ENCODE measurements at regions of chr15 and their contacts with region 1.

Region 1: GRCh38 chr15:27527490-27528067 is 556.6 kb downstream of the GABRG3 start:
- DNase-seq: no peak
- H3K4me3 ChIP-seq: no peak overlapping the region
- H3K27ac ChIP-seq: no peak overlapping the region
- H3K4me1 ChIP-seq: no peaks in the 10 kb centered on the region
- H3K27me3 ChIP-seq: no peaks in the 10 kb centered on the region
- CTCF ChIP-seq: no peak
- EP300 ChIP-seq: no peak
- POLR2A ChIP-seq: no peak

Region 2: DNA sequence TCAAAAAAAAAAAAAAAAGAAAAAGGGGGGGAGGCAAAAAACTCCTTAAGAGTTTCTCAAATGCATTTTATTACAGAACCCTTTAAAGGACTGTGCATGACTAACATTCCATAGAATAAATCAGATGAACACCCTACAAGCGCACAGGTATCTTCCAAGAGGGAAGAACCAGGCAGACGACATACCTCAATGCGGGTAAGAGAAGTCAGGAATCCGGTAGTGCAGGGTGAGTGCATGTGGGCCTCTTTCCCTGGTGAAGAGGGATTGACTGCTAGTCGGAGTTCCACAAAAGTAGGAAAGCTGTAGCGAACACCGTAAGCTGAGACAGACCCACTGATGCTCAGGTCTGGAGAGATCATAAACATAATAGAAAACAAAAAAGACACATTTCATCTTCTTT is 1187.2 kb before region 1 on chr15:
- intact Hi-C with region 1: loop called in 1 of 4 experiments (anchors 5 kb)
- DNase-seq: no peak
- H3K4me3 ChIP-seq: no peak overlapping the region
- H3K27ac ChIP-seq: no peak overlapping the region
- H3K4me1 ChIP-seq: no peaks in the 10 kb centered on the region
- H3K27me3 ChIP-seq: no peaks in the 10 kb centered on the region
- CTCF ChIP-seq: no peak
- EP300 ChIP-seq: no peak
- POLR2A ChIP-seq: no peak

Region 3: DNA sequence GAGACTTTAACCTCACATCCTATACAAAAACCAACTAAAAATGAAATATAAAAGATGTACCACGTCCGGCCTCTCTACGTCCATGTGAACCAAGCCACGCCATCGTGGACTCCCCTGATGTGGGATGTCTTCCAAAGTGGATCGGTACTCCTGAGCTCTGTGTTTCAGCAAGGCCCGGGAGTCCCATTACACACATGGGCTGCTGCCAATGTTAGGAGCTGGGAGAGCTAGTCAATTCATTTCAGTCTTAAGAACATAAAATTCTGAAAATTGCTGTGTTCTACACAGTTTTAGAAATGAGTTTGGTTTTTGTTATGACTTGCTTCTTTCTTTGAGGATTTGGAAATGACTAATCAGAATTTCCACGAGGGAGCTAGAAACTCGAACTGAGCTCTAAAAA is 425.6 kb before region 1 on chr15:
- intact Hi-C with region 1: loop called in 1 of 4 experiments (anchors 5 kb)
- DNase-seq: no peak
- H3K4me3 ChIP-seq: no peak overlapping the region
- H3K27ac ChIP-seq: no peak overlapping the region
- H3K4me1 ChIP-seq: no peaks in the 10 kb centered on the region
- H3K27me3 ChIP-seq: no peaks in the 10 kb centered on the region
- CTCF ChIP-seq: no peak
- EP300 ChIP-seq: no peak
- POLR2A ChIP-seq: no peak

Region 4: DNA sequence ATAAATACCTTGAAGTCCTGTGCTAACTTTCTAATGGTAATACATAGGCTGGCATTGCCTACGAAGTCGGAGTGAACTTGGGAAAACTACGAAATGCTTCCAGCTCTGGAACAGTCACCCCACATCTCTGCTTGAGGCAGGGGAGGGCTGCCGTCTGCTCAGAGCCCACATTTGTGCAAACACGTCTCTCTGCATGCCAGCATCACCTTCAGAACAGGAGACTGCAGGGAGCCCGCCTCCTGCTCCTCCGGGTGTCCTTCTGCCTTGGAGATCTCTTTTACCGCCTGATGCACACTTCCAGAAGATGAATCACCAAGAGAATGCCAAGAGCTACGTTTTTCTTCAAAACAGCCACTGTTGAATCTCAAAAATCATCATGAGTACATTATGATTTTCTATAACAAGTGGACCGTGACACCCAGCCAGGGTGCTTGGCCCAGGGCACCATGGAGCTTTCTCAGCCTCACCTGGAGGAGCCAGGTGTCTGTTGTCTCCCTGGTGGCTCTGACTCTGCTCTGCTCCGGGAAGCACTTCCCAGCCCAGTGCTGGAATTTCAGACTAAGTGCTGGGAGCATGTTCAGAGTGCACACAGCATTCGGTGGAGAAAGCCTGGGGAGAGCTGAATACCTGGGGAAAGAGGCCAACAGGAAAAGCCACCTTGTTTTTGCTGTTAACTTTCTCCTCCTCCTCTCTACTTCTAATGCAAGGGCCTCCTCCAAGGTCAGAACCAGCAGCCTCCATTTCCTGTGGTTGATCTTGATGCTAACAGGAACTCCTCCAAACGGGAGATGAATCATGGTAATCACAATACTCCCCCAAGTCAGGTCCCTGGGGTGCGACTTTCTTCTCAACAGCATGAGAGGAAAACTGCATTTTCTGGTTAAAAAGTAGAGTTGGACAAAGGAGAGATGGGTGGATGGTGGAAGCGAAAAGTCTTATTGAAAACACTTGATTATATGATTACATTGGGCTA is 88.9 kb before region 1 on chr15:
- intact Hi-C with region 1: no loop called
- DNase-seq: no peak
- H3K4me3 ChIP-seq: no peak overlapping the region
- H3K27ac ChIP-seq: no peak overlapping the region
- H3K4me1 ChIP-seq: no peaks in the 10 kb centered on the region
- H3K27me3 ChIP-seq: no peaks in the 10 kb centered on the region
- CTCF ChIP-seq: no peak
- EP300 ChIP-seq: no peak
- POLR2A ChIP-seq: no peak

Region 5: DNA sequence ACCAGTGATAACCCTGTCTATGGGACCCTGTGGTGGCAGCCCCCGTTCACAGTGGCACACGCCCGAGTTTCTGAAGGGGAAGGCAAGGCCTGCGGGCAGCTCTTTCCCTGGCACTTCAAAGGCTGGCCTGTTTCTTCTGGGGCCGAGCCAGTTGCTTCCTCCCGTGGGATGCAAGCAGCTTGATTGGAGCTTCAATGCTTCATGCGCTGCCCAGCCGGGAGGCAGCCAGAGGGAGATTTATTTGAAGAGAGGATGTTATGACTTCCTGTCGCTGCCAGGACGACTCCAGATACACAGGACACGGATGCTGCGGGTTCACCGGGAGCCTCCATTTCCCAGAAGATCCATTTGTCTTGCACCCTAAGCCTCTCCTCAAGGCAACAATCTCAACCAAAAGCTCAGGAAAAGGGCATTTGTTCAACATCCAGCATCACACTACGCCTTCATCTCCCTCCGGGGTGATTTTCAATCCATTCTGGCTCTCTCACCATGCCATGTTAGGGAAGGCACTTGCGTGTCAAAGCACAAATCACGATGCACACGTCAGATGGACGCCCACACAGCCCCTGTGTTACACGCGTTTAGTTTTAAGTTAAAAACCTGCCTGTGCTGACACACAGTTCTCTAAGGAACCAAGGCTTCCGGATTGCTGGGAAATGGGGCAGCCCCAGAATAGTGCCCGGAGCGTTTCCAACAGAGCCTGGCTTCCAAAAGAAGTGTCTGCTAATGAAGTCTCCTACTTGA is 241.3 kb after region 1 on chr15:
- intact Hi-C with region 1: no loop called
- DNase-seq: no peak
- H3K4me3 ChIP-seq: no peak overlapping the region
- H3K27ac ChIP-seq: no peak overlapping the region
- H3K4me1 ChIP-seq: no peaks in the 10 kb centered on the region
- H3K27me3 ChIP-seq: no peaks in the 10 kb centered on the region
- CTCF ChIP-seq: no peak
- EP300 ChIP-seq: no peak
- POLR2A ChIP-seq: no peak